ENCODE measurements at regions of chr22 and their contacts with region 1.

Region 1: GRCh38 chr22:32985899-32986765 is 72.0 kb downstream of the SYN3 start:
- DNase-seq: peak; percentile 64
- ATAC-seq: peak; percentile 95 to 97

Region 2: DNA sequence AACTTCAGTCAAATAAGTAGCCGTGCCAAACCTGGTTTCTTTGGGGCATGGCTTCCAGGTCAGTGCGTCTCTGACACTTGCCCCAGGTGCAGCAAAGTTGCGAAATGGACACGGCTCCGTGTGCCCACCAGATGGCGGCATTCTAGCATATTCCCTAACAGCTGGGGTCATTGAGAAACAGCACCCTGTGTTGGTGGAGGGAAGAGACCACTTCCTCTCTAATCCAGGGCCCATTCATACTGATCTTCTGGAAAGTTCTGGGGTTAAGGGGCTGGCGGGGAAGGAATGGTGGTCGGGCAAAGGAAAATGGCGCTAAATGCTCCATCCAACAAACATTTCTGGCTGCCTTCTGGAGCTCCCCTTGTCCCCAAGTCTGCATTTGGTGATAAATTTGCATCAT is 325.8 kb before region 1 on chr22:
- intact Hi-C with region 1: loop called (anchors 5 kb)
- DNase-seq: peak; percentile 72
- ATAC-seq: peak; percentile 75 to 77

Region 3: DNA sequence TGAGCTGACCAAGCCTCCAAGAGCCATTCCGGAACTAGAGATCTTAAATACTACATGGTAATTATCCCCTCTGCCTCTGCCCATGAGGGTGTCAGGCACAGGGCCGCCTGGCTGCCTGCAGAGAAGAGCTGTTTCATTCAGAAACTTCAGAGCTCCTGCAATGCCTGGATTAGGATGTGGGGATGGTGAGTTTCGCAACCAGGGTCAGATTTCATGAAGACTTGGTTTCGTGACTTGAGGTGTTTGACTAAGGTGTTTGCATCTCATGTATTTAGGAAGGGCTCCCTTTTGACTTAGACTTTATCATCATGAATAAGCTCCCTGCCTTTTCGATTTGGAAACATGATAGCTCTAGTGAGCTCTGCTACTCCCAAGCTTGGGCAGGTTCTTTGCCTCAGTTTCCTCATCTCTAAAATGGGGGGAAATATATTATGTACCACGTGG is 175.5 kb before region 1 on chr22:
- intact Hi-C with region 1: loop called in 1 of 2 experiments (anchors 2 kb)
- DNase-seq: no peak
- ATAC-seq: no peak

Region 4: GRCh38 chr22:32926600-32926999 is 59.5 kb before region 1 on chr22:
- intact Hi-C with region 1: loop called (anchors 5 to 10 kb)
- DNase-seq: no peak
- ATAC-seq: peak in 1 of 2 donors; percentile 35